CD4-positive, alpha-beta T cell (primary cell): ENCODE measurements at regions of chr2 and their contacts with region 1.

Region 1: DNA sequence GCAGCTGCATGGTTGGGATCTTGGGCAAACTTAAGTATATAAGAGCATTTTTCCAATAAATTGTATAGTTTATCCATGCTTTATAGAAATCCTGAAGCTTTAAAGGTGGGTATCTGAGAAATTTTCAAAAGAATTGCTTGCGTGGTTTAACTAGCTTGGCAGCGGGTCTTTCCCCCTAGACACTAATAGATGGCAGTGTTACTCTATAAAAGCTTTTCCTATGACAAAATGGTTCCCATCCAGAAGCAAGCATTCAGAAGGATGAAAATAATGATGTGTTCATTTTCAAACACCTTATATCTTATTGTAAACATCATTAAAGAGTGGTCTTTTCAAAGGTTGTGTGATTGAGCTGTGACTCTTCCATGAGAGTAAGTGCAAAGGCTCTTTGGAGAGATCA is 45.9 kb downstream of the KDM3A start:
- DNase-seq: peak in 1 of 14 experiments; percentile 14
- ATAC-seq: no peak
- H3K4me3 ChIP-seq: no peak overlapping the region
- H3K4me3 Mint-ChIP-seq: no peak overlapping the region
- H3K27ac ChIP-seq: no peak overlapping the region
- H3K27ac Mint-ChIP-seq: peak overlapping the region; percentile 34
- H3K4me1 ChIP-seq: no peaks in the 10 kb centered on the region
- H3K4me1 Mint-ChIP-seq: peaks cover 15% of the 10 kb centered on the region
- H3K27me3 ChIP-seq: no peaks in the 10 kb centered on the region
- H3K27me3 Mint-ChIP-seq: no peaks in the 10 kb centered on the region
- CTCF ChIP-seq: no peak

Region 2: DNA sequence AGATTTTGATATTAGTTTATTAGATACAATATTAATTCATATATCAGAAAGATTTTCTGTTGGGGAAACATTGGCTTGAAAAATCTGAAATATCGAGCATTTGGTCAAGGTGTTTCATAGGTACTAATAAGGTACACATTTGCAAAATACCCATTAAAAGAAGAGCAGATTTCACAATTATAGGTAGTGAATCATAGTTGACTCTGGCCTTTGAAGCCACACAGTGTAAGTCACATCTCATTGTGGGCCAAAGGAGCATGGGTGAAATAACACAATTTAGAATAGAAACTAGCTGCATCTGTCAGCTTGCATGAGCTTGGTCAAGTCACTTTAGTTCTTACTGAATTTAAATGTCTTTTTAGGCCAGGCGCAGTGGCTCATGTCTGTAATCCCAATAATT is 41.0 kb before region 1 on chr2:
- CTCF ChIA-PET with region 1: no interaction called
- POLR2A ChIA-PET with region 1: interaction called, 3 read pairs
- intact Hi-C with region 1: loop called in 1 of 2 experiments (anchors 5 kb)
- DNase-seq: no peak
- ATAC-seq: no peak
- H3K4me3 ChIP-seq: no peak overlapping the region
- H3K4me3 Mint-ChIP-seq: no peak overlapping the region
- H3K27ac ChIP-seq: no peak overlapping the region
- H3K27ac Mint-ChIP-seq: peak overlapping the region; percentile 40
- H3K4me1 ChIP-seq: peaks cover 40% of the 10 kb centered on the region
- H3K4me1 Mint-ChIP-seq: peaks cover 83% of the 10 kb centered on the region
- H3K27me3 ChIP-seq: no peaks in the 10 kb centered on the region
- H3K27me3 Mint-ChIP-seq: peaks cover 2% of the 10 kb centered on the region
- CTCF ChIP-seq: no peak

Region 3: GRCh38 chr2:86468162-86469033 is 18.7 kb before region 1 on chr2:
- CTCF ChIA-PET with region 1: no interaction called
- POLR2A ChIA-PET with region 1: no interaction called
- intact Hi-C with region 1: no loop called
- DNase-seq: peak in 6 of 14 experiments; percentile 5 to 54 (median 30)
- ATAC-seq: peak; percentile 76
- H3K4me3 ChIP-seq: peak overlapping the region; percentile 19
- H3K4me3 Mint-ChIP-seq: peak overlapping the region; percentile 80
- H3K27ac ChIP-seq: peak overlapping the region; percentile 21 to 62
- H3K27ac Mint-ChIP-seq: peak overlapping the region; percentile 90
- H3K4me1 ChIP-seq: peaks cover 10% of the 10 kb centered on the region
- H3K4me1 Mint-ChIP-seq: peaks cover 76% of the 10 kb centered on the region
- H3K27me3 ChIP-seq: no peaks in the 10 kb centered on the region
- H3K27me3 Mint-ChIP-seq: no peaks in the 10 kb centered on the region
- CTCF ChIP-seq: no peak

Region 4: GRCh38 chr2:86695053-86695691 is 208.1 kb after region 1 on chr2:
- CTCF ChIA-PET with region 1: no interaction called
- POLR2A ChIA-PET with region 1: no interaction called
- intact Hi-C with region 1: no loop called
- DNase-seq: no peak
- ATAC-seq: no peak
- H3K4me3 ChIP-seq: no peak overlapping the region
- H3K4me3 Mint-ChIP-seq: no peak overlapping the region
- H3K27ac ChIP-seq: no peak overlapping the region
- H3K27ac Mint-ChIP-seq: no peak overlapping the region
- H3K4me1 ChIP-seq: no peaks in the 10 kb centered on the region
- H3K4me1 Mint-ChIP-seq: peaks cover 9% of the 10 kb centered on the region
- H3K27me3 ChIP-seq: no peaks in the 10 kb centered on the region
- H3K27me3 Mint-ChIP-seq: peaks cover 3% of the 10 kb centered on the region
- CTCF ChIP-seq: no peak